PC-3 (cell line): ENCODE measurements at regions of chr6 and their contacts with region 1.

Region 1: DNA sequence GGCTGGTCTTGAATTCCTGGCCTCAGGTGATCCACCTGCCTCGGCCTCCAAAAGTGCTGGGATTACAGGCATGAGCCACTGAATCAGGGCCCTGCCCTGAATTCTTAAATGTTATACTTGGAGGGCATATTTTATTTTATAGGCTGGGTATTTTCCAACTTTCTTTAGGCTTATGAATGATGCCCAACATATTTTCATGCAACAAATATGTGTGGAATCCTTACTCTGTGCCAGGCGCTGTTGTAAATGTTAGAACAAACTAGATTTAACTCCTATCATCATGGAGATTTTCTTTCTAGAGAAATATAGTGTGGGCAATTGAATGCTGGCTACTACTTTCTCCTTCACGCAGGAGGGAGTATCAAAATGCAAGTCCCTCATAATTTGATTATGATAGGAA is 71.2 kb downstream of the SAMD5 start:
- DNase-seq: peak; percentile 75
- ATAC-seq: peak; percentile 81
- H3K4me3 ChIP-seq: no peak overlapping the region
- H3K27ac ChIP-seq: no peak overlapping the region
- H3K4me1 ChIP-seq: peaks cover 29% of the 10 kb centered on the region
- H3K27me3 ChIP-seq: no peaks in the 10 kb centered on the region
- CTCF ChIP-seq: no peak

Region 2: GRCh38 chr6:147642458-147642857 is 62.8 kb after region 1 on chr6:
- CTCF ChIA-PET with region 1: no interaction called
- POLR2A ChIA-PET with region 1: no interaction called
- intact Hi-C with region 1: loop called (anchors 1 kb)
- DNase-seq: peak; percentile 68
- ATAC-seq: peak; percentile 87
- H3K4me3 ChIP-seq: no peak overlapping the region; the same call in 1 of the 2 replicates
- H3K27ac ChIP-seq: peak overlapping the region; percentile 46
- H3K4me1 ChIP-seq: peaks cover 16% of the 10 kb centered on the region
- H3K27me3 ChIP-seq: no peaks in the 10 kb centered on the region
- CTCF ChIP-seq: no peak